ENCODE measurements at regions of chr9 and their contacts with region 1.

Region 1: DNA sequence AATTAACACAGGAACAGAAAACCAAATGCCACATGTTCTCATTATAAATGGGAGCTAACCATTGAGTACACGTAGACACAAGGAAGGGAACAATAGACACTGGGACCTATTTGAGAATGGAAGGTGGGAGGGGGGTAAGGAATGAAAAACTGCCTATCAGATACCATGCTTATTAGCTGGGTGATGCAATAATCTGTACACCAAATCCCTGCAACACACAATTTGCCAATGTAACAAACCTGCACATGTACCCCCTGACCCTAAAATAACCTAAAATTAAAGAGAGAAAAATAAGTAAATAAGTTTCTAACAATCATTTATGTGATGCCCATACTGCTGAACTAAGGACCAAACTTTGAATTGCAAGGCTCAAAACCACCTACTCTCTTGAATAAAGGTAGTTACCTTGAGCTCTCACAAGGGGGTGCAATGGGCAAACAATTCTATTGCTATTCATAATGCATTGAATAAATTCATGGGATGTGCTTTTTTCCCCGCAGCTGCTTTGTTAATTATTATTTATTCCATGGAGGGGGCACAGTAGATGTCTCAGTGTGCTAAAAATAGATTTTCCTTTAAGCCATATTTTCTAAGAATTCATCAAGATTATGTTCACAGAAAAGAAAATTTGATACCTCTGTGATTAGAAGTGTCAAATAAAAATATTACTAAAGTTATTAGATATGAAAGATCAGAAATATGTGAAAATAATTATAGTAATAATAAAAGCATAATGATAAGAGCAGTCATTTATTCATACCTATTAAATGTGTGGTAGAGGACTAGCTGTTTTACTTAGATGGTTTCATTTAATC is 76.2 kb upstream of the PTPN3 start:
- DNase-seq: peak; percentile 29
- H3K4me3 ChIP-seq: no peak overlapping the region
- H3K27ac ChIP-seq: no peak overlapping the region
- H3K4me1 ChIP-seq: no peaks in the 10 kb centered on the region
- H3K27me3 ChIP-seq: no peaks in the 10 kb centered on the region
- CTCF ChIP-seq: peak; percentile 60 to 68 (median 63)
- EP300 ChIP-seq: no peak
- POLR2A ChIP-seq: no peak

Region 2: DNA sequence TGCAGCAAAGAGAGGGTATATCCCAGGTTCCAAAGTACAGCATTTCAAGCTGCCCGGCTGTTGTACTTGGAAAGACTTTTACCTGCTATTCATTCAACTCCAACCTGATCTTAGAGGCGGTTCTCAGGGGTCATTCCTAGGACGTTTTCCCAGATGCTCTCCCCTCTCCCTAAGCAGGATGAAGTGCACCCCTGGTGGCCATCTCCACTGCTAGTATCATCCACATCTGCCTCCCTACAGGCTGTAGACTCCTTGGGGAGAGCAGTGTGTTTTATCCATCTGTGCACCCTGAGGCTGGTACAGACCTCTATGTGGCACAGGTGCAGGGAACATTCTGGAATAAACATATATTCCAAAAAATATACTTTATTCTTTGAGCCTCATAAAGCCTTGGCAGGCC is 133.0 kb before region 1 on chr9:
- intact Hi-C with region 1: no loop called
- DNase-seq: no peak
- H3K4me3 ChIP-seq: no peak overlapping the region
- H3K27ac ChIP-seq: no peak overlapping the region
- H3K4me1 ChIP-seq: peaks cover 0 to 4% (median 4%) of the 10 kb centered on the region in 4 donors
- H3K27me3 ChIP-seq: no peaks in the 10 kb centered on the region
- CTCF ChIP-seq: no peak
- EP300 ChIP-seq: no peak
- POLR2A ChIP-seq: no peak

Region 3: DNA sequence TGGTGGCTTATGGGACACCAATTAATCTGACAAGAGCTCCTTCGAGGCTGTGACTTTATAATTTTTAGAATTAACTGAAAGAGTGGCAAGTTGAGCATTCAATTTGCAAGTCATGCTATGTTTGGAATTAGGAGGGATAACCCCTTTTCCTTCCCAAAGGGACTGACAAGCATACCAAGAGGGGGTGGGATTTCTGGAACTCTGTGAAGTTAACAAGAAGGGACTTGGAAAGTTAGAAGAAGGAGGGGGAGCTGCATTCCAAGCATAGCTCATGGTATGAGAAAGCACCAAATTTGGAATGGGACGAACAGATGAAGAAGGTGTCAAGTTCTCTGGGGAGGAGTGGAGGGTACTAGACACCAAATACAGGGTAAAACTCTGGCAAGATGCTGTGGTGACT is 196.8 kb after region 1 on chr9:
- intact Hi-C with region 1: no loop called
- DNase-seq: no peak
- H3K4me3 ChIP-seq: no peak overlapping the region
- H3K27ac ChIP-seq: no peak overlapping the region
- H3K4me1 ChIP-seq: peaks cover 17 to 28% (median 26%) of the 10 kb centered on the region in 4 donors
- H3K27me3 ChIP-seq: no peaks in the 10 kb centered on the region
- CTCF ChIP-seq: no peak
- EP300 ChIP-seq: no peak
- POLR2A ChIP-seq: no peak

Region 4: GRCh38 chr9:109817846-109818472 is 243.7 kb after region 1 on chr9:
- intact Hi-C with region 1: loop called (anchors 2 kb)
- DNase-seq: no peak
- H3K4me3 ChIP-seq: no peak overlapping the region
- H3K27ac ChIP-seq: peak overlapping the region in 2 of 4 donors; percentile 18 to 39
- H3K4me1 ChIP-seq: peaks cover 5 to 17% (median 12%) of the 10 kb centered on the region in 4 donors
- H3K27me3 ChIP-seq: no peaks in the 10 kb centered on the region
- CTCF ChIP-seq: peak; percentile 83 to 85 (median 83)
- EP300 ChIP-seq: no peak
- POLR2A ChIP-seq: no peak

Region 5: DNA sequence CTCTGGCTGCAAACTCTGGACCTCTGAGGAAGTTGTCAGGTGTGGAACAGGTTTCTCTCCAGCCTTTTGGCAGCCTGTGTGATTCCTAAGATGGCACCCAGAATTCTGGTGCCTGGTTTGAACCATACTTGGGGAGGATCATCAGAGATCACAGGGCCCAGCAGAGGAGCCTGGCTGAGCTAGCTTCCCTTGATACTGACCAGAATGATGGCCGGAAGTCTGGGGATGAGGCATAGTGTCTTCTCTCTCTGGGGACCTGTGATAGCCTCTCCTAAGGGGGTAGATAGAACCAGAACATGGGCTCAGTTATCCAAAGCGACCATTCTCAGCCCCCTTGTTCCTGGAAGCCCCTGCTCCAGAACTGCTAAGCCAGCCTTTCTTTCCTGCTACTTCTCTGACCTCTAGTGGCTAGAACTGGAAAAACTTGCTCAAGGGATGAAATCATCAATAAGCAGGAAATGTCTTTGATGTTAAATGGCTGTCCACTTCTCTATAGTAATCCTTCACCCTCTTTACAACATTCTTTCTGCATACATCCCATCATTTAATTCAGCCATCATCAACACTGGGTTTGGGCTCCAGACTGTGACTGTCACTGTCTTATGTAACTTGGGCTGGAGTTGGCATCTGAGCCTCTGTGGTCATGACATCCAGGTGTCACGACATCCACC is 578.6 kb after region 1 on chr9:
- intact Hi-C with region 1: loop called (anchors 10 kb)
- DNase-seq: no peak
- H3K4me3 ChIP-seq: no peak overlapping the region
- H3K27ac ChIP-seq: peak overlapping the region in 2 of 4 donors; percentile 24 to 38
- H3K4me1 ChIP-seq: peaks cover 60 to 76% (median 69%) of the 10 kb centered on the region in 4 donors
- H3K27me3 ChIP-seq: no peaks in the 10 kb centered on the region
- CTCF ChIP-seq: peak; percentile 64 to 76 (median 69)
- EP300 ChIP-seq: no peak
- POLR2A ChIP-seq: no peak

Measured in esophagus muscularis mucosa (tissue), 4 donors.